ENCODE measurements at regions of chr2 and their contacts with region 1.

Region 1: GRCh38 chr2:156687715-156688114 is 251.5 kb downstream of the GPD2 start:
- DNase-seq: no peak
- H3K4me3 ChIP-seq: no peak overlapping the region
- CTCF ChIP-seq: no peak
- POLR2A ChIP-seq: no peak

Region 2: DNA sequence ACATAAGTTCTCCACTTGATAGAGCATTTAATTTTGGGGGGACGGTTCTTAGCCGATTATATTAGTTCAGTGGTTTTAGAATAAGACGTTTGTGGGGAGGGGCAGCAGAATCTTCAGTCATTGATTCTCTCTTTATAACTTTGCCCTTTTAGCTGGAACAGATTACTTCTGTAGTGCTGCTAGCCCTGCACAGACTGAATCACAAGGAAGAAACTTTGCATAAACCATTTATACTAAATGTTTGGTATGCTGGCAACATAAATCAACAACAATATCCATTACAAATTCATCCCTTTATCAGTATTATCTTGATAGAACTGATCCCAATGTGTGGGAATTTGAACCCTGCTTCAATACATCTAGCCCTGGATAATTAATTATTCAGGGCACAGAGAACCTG is 139.3 kb before region 1 on chr2:
- intact Hi-C with region 1: loop called (anchors 5 kb)
- DNase-seq: no peak
- H3K4me3 ChIP-seq: no peak overlapping the region
- CTCF ChIP-seq: no peak
- POLR2A ChIP-seq: no peak

Measured in lower leg skin (tissue), 4 donors.